ENCODE measurements at regions of chr15 and their contacts with region 1.

Region 1: GRCh38 chr15:74460871-74461846 is at the start of gene UBL7:
- DNase-seq: peak; percentile 95 to 99
- H3K4me3 ChIP-seq: peak within 1 kb of the TSS; percentile 65 to 70
- H3K27ac ChIP-seq: peak within 1 kb of the TSS; percentile 68 to 79
- H3K4me1 ChIP-seq: peaks cover 6 to 9% of the 10 kb centered on the region in 2 donors
- H3K27me3 ChIP-seq: no peaks in the 10 kb centered on the region
- CTCF ChIP-seq: peak in 1 of 3 experiments; percentile 21
- total RNA-seq, gene UBL7: 63.4 TPM

Region 2: DNA sequence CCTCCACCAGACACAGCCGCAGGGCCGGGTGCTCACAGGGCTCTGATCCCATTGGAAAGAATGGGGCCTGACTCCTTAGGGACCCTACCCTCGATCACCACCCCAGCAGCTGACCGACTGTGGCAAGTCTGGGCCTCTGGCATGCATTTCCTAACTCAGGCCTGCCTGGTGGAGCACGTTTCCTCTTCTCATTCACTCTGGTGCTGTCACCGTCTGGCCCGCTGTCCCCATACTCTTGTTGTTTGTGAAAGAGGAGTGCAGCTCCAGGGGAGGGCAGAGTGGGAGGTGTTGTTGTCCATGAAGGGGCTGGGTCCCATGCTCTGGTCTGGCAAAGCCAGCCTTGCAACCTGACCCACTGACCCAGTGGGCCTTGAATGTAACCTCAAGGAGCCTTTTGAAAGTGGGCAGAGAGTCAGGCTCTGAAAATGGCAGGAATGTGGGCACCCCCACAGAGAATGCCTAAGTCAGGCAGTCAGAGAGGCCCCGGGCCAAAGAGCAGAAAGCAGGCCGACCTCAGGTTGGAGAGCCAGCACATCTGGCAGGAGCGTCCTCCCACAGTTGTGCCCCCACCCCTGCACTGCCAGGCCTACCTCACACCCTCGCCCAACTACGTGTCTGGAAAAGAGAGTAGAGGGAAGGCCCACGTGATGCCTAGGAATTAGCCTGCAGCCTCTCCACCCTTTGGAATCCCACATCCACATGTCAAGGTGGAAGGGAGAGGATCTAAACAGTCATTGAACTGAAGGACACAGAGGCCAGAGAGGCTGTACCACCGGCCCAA is 38.3 kb before region 1 on chr15:
- intact Hi-C with region 1: no loop called
- DNase-seq: peak in 1 of 2 donors; percentile 68
- H3K4me3 ChIP-seq: no peak overlapping the region
- H3K27ac ChIP-seq: peak overlapping the region; percentile 53 to 69
- H3K4me1 ChIP-seq: peaks cover 0 to 10% of the 10 kb centered on the region in 2 donors
- H3K27me3 ChIP-seq: no peaks in the 10 kb centered on the region
- CTCF ChIP-seq: no peak

Region 3: GRCh38 chr15:74695597-74696397 is 234.6 kb after region 1 on chr15 and contains the start of gene EDC3:
- intact Hi-C with region 1: loop called (anchors 10 kb)
- DNase-seq: peak; percentile 35 to 92
- H3K4me3 ChIP-seq: peak within 1 kb of the TSS; percentile 85 to 90
- H3K27ac ChIP-seq: peak within 1 kb of the TSS; percentile 88 to 91
- H3K4me1 ChIP-seq: peaks cover 7 to 15% of the 10 kb centered on the region in 2 donors
- H3K27me3 ChIP-seq: no peaks in the 10 kb centered on the region
- CTCF ChIP-seq: no peak
- total RNA-seq, gene EDC3: 8.8 TPM